MCF 10A (cell line): ENCODE measurements at regions of chr17 and their contacts with region 1.

Region 1: DNA sequence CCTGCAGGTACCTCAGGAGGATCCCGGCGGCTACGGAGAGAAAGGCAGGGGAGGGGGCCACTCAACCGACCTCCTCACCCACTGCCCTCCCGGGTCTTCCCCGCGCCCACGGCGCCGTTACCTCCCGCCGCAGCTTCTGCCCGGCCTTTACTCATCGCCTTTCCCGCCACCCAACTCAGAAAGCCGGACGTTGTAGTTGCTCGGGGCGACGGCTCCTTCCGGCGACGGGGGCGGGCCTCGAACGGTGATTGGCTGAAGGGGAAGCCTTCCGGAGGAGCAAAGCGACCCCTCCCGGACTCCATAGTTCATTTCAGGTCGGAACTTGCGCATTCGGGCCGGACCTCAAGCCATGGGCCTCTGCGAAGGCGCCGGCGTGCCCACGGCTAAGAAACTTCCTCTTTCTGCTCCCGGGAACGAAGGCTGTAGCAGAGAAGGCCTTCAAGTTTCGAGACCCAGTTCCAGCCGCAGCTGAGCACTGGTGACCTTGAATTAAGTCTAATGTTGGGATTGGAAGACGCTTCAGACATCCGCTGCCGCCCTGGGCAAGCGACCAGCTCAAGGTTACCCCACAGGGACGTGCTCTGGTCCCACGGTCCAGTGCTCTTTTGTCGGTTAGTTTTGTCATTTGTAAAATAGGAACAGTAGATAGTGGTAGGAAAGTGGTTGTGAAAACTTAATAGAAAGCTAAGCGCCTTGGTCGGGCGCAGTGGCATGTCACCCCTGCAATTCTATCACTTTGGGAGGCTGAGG is at the start of gene PSMC3IP:
- DNase-seq: peak; percentile 95
- H3K4me3 Mint-ChIP-seq: peak within 1 kb of the TSS; percentile 78
- H3K27ac Mint-ChIP-seq: peak within 1 kb of the TSS; percentile 80
- H3K4me1 Mint-ChIP-seq: peaks cover 24% of the 10 kb centered on the region
- H3K27me3 Mint-ChIP-seq: no peaks in the 10 kb centered on the region
- CTCF ChIP-seq: peak; percentile 26
- total RNA-seq, gene PSMC3IP: 10.3 and 12.0 TPM in 2 replicates

Region 2: GRCh38 chr17:42527273-42527703 is 50.4 kb before region 1 on chr17:
- CTCF ChIA-PET with region 1: interaction called, 10 read pairs
- POLR2A ChIA-PET with region 1: interaction called, 3 read pairs
- intact Hi-C with region 1: no loop called
- DNase-seq: peak; percentile 85
- H3K4me3 Mint-ChIP-seq: no peak overlapping the region
- H3K27ac Mint-ChIP-seq: no peak overlapping the region
- H3K4me1 Mint-ChIP-seq: peaks cover 17% of the 10 kb centered on the region
- H3K27me3 Mint-ChIP-seq: no peaks in the 10 kb centered on the region
- CTCF ChIP-seq: peak; percentile 90

Region 3: DNA sequence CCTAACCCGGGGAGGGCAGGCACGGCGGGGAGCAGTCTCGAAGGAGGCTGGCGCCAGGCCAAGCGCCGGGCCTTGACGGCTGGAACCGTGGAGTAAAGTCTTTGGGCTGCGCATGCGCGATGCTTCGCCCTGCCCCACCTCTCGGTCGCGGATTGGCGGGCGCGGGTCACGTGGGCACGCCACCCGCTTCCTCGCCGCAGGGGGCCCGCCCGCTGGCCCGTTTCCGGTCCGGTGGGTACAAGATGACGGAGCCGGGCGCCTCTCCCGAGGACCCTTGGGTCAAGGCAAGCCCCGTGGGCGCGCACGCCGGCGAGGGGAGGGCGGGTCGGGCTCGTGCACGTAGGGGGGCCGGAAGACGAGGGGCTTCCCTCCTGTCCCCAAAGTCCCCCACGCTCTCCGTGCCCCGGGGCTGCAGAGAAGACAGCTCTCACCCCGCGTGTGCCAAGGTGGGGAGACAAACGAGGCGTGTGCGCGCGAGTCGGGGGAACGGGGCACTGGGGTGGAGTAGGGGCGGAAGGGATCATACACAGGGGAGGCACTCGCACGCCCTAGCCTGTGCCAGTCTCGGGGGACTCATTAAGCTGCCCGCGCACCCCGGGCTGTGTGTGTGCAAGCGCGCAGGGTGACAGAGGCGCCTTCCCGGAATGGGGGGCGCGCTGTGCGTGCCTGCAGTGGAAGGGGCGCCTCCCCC is 10.7 kb before region 1 on chr17 and contains the start of gene MLX:
- CTCF ChIA-PET with region 1: interaction called, 17 read pairs
- POLR2A ChIA-PET with region 1: interaction called, 51 read pairs
- intact Hi-C with region 1: no loop called
- DNase-seq: peak; percentile 90
- H3K4me3 Mint-ChIP-seq: peak within 1 kb of the TSS; percentile 79
- H3K27ac Mint-ChIP-seq: peak within 1 kb of the TSS; percentile 90
- H3K4me1 Mint-ChIP-seq: peaks cover 13% of the 10 kb centered on the region
- H3K27me3 Mint-ChIP-seq: no peaks in the 10 kb centered on the region
- CTCF ChIP-seq: no peak
- total RNA-seq, gene MLX: 37.3 and 39.6 TPM in 2 replicates

Region 4: GRCh38 chr17:42659079-42659931 is 81.6 kb after region 1 on chr17 and contains the start of gene TUBG2:
- CTCF ChIA-PET with region 1: interaction called, 9 read pairs
- POLR2A ChIA-PET with region 1: interaction called, 11 read pairs
- intact Hi-C with region 1: no loop called
- DNase-seq: peak; percentile 88
- H3K4me3 Mint-ChIP-seq: peak within 1 kb of the TSS; percentile 88
- H3K27ac Mint-ChIP-seq: peak within 1 kb of the TSS; percentile 70
- H3K4me1 Mint-ChIP-seq: peaks cover 16% of the 10 kb centered on the region
- H3K27me3 Mint-ChIP-seq: no peaks in the 10 kb centered on the region
- CTCF ChIP-seq: no peak
- total RNA-seq, gene TUBG2: 21.3 and 23.4 TPM in 2 replicates

Region 5: GRCh38 chr17:42682722-42683403 is 105.2 kb after region 1 on chr17:
- CTCF ChIA-PET with region 1: interaction called, 55 read pairs
- POLR2A ChIA-PET with region 1: interaction called, 57 read pairs
- intact Hi-C with region 1: loop called (anchors 1 kb)
- DNase-seq: peak; percentile 52
- H3K4me3 Mint-ChIP-seq: peak overlapping the region; percentile 74
- H3K27ac Mint-ChIP-seq: no peak overlapping the region
- H3K4me1 Mint-ChIP-seq: peaks cover 19% of the 10 kb centered on the region
- H3K27me3 Mint-ChIP-seq: no peaks in the 10 kb centered on the region
- CTCF ChIP-seq: no peak

Region 6: DNA sequence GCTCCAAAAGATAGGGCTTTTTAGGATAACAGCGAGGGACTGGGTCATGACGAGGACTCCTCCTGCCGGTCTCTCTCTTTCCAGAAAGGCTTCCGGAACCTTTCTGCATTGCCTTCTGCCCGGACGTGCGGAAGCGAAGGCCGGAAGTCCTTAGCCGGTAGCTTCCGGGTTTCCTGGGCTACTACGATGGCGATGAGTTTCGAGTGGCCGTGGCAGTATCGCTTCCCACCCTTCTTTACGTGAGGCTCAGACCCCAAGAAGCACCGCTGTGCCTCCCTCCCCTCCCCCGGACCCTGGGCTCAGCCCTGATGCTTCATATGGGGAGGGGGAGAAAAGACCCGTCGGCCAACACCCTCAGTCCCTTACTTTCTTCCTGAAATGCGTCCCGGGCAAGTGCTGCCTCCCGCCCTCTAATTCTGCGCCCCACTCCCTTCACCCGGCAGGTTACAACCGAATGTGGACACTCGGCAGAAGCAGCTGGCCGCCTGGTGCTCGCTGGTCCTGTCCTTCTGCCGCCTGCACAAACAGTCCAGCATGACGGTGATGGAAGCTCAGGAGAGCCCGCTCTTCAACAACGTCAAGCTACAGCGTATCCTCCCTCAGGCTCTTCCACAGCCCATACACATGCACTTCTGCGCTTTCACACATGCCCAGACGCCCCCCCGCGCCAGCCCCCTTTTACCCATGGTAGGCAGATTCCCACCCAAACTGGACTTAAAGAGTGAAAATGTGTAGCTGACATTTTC is 195.8 kb after region 1 on chr17 and contains the start of gene VPS25:
- CTCF ChIA-PET with region 1: interaction called, 3 read pairs
- POLR2A ChIA-PET with region 1: interaction called, 18 read pairs
- intact Hi-C with region 1: no loop called
- DNase-seq: peak; percentile 84
- H3K4me3 Mint-ChIP-seq: peak within 1 kb of the TSS; percentile 87
- H3K27ac Mint-ChIP-seq: peak within 1 kb of the TSS; percentile 89
- H3K4me1 Mint-ChIP-seq: peaks cover 8% of the 10 kb centered on the region
- H3K27me3 Mint-ChIP-seq: no peaks in the 10 kb centered on the region
- CTCF ChIP-seq: no peak
- total RNA-seq, gene VPS25: 84.3 and 96.0 TPM in 2 replicates